GM12878 (cell line): ENCODE measurements at regions of chr11 and their contacts with region 1.

Region 1: DNA sequence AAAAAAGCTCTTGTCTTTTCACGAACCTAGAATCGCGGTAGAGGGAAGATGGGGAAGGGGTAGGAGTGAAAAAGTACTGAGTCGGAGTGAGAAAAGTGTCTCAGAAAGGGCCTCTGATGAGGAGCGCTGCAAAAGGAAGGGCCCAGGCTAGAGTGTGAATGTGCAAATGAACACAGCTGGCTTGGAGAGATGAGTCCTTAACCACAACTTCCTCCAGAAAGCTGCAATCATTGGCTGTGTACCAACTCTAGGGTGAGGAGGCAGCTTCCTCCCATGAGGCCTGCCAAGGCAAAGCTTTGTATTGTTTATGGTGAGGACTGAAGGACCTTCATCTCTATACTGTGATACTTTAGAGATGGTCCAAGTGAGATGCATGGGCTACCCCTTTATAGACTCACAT is 566.9 kb upstream of the ANO5 start:
- DNase-seq: no peak
- ATAC-seq: peak; percentile 26
- H3K4me3 ChIP-seq: no peak overlapping the region
- H3K27ac ChIP-seq: no peak overlapping the region
- H3K4me1 ChIP-seq: no peaks in the 10 kb centered on the region
- H3K27me3 ChIP-seq: no peaks in the 10 kb centered on the region
- CTCF ChIP-seq: no peak
- EP300 ChIP-seq: no peak
- POLR2A ChIP-seq: no peak
- RAD21 ChIP-seq: no peak

Region 2: GRCh38 chr11:21615955-21616371 is 10.0 kb before region 1 on chr11:
- CTCF ChIA-PET with region 1: interaction called, 3 read pairs
- POLR2A ChIA-PET with region 1: no interaction called
- RAD21 ChIA-PET with region 1: no interaction called
- SMC1A ChIA-PET with region 1: interaction called, 4 read pairs
- in situ Hi-C with region 1: no loop called
- intact Hi-C with region 1: loop called (anchors 2 kb)
- DNase-seq: no peak
- ATAC-seq: no peak
- H3K4me3 ChIP-seq: no peak overlapping the region
- H3K27ac ChIP-seq: no peak overlapping the region
- H3K4me1 ChIP-seq: no peaks in the 10 kb centered on the region
- H3K27me3 ChIP-seq: no peaks in the 10 kb centered on the region
- CTCF ChIP-seq: no peak
- EP300 ChIP-seq: no peak
- POLR2A ChIP-seq: no peak
- RAD21 ChIP-seq: no peak